ENCODE measurements at regions of chr12 and their contacts with region 1.

Region 1: DNA sequence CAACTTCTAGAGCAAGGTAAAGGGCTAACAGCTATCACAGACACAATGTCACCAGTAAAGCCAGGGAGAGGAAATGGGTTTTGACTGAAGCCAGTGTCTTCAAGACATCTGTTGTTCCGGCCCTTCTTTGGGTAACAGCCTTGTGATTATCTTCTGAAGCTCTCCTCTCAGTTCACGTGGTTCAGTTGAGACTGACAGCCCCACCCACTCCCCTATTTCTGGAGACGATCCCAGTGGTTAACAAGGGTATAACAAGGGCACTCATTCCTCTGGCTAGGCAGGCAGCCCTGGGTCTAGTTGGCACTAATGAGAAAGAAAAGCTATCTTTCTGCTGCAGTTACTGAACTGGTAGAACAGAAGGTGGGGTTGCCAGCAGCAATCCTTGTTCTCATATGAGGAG is 6.9 kb downstream of the GNPTAB start:
- DNase-seq: peak; percentile 21 to 66 (median 40)
- H3K4me3 ChIP-seq: no peak overlapping the region
- H3K27ac ChIP-seq: no peak overlapping the region
- H3K4me1 ChIP-seq: peaks cover 2 to 10% of the 10 kb centered on the region in 2 donors
- H3K27me3 ChIP-seq: no peaks in the 10 kb centered on the region
- CTCF ChIP-seq: peak in 5 of 6 experiments; percentile 21 to 39 (median 33)
- POLR2A ChIP-seq: no peak

Region 2: GRCh38 chr12:101782273-101782731 is 41.6 kb before region 1 on chr12:
- intact Hi-C with region 1: loop called in 1 of 2 experiments (anchors 5 kb)
- DNase-seq: no peak
- H3K4me3 ChIP-seq: no peak overlapping the region
- H3K27ac ChIP-seq: no peak overlapping the region
- H3K4me1 ChIP-seq: no peaks in the 10 kb centered on the region
- H3K27me3 ChIP-seq: no peaks in the 10 kb centered on the region
- CTCF ChIP-seq: no peak
- POLR2A ChIP-seq: no peak